A673 (cell line): ENCODE measurements at regions of chr1 and their contacts with region 1.

Region 1: DNA sequence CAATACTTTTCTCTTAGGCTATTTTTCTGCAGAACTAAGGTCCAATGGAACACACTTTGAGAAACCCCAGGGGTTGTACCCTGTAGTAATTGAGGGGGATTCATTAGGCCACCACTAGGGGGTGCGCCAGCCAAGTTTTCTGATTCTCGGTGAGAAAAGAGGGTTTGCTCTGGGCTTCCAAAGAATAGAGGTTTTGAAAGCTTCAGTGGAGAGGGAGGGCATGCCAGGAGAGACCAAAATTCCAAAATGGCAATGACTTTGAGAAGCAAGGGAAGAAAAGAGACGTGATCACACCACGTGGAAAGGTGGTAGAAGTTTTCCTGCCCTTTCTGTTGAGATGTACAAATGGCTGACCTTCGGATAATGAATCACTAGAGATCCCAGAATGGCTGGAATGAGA is 323.3 kb downstream of the RPS6KC1 start:
- DNase-seq: peak; percentile 73
- H3K4me3 ChIP-seq: no peak overlapping the region
- H3K27ac ChIP-seq: no peak overlapping the region
- H3K4me1 ChIP-seq: no peaks in the 10 kb centered on the region
- H3K27me3 ChIP-seq: no peaks in the 10 kb centered on the region
- CTCF ChIP-seq: peak; percentile 95

Region 2: GRCh38 chr1:213122514-213122929 is 251.8 kb before region 1 on chr1:
- CTCF ChIA-PET with region 1: no interaction called
- POLR2A ChIA-PET with region 1: no interaction called
- intact Hi-C with region 1: loop called (anchors 5 kb)
- DNase-seq: peak; percentile 65
- H3K4me3 ChIP-seq: no peak overlapping the region
- H3K27ac ChIP-seq: no peak overlapping the region
- H3K4me1 ChIP-seq: no peaks in the 10 kb centered on the region
- H3K27me3 ChIP-seq: no peaks in the 10 kb centered on the region
- CTCF ChIP-seq: peak; percentile 68

Region 3: GRCh38 chr1:213389061-213389581 is 14.8 kb after region 1 on chr1:
- CTCF ChIA-PET with region 1: no interaction called
- POLR2A ChIA-PET with region 1: no interaction called
- intact Hi-C with region 1: no loop called
- DNase-seq: no peak
- H3K4me3 ChIP-seq: no peak overlapping the region
- H3K27ac ChIP-seq: no peak overlapping the region
- H3K4me1 ChIP-seq: no peaks in the 10 kb centered on the region
- H3K27me3 ChIP-seq: peaks cover 27% of the 10 kb centered on the region
- CTCF ChIP-seq: no peak

Region 4: GRCh38 chr1:213492161-213493041 is 118.0 kb after region 1 on chr1:
- CTCF ChIA-PET with region 1: no interaction called
- POLR2A ChIA-PET with region 1: no interaction called
- intact Hi-C with region 1: no loop called
- DNase-seq: no peak
- H3K4me3 ChIP-seq: no peak overlapping the region
- H3K27ac ChIP-seq: no peak overlapping the region
- H3K4me1 ChIP-seq: no peaks in the 10 kb centered on the region
- H3K27me3 ChIP-seq: peaks cover 62% of the 10 kb centered on the region
- CTCF ChIP-seq: no peak

Region 5: GRCh38 chr1:213987927-213988506 is 613.6 kb after region 1 on chr1 and contains the start of gene PROX1:
- CTCF ChIA-PET with region 1: no interaction called
- POLR2A ChIA-PET with region 1: no interaction called
- intact Hi-C with region 1: loop called (anchors 10 kb)
- DNase-seq: peak; percentile 90
- H3K4me3 ChIP-seq: peak within 1 kb of the TSS; percentile 33
- H3K27ac ChIP-seq: no peak within 1 kb of the TSS
- H3K4me1 ChIP-seq: peaks cover 4% of the 10 kb centered on the region
- H3K27me3 ChIP-seq: peaks cover 95% of the 10 kb centered on the region
- CTCF ChIP-seq: no peak
- total RNA-seq, gene PROX1: not detected in 2 replicates

Region 6: GRCh38 chr1:214123061-214123784 is 748.9 kb after region 1 on chr1:
- CTCF ChIA-PET with region 1: interaction called, 4 read pairs
- POLR2A ChIA-PET with region 1: no interaction called
- intact Hi-C with region 1: loop called (anchors 5 kb)
- DNase-seq: peak; percentile 55
- H3K4me3 ChIP-seq: no peak overlapping the region
- H3K27ac ChIP-seq: no peak overlapping the region
- H3K4me1 ChIP-seq: no peaks in the 10 kb centered on the region
- H3K27me3 ChIP-seq: peaks cover 13% of the 10 kb centered on the region
- CTCF ChIP-seq: peak; percentile 66